Right ventricle myocardium inferior (tissue), 1 donor: ENCODE measurements at regions of chr3 and their contacts with region 1.

Region 1: GRCh38 chr3:149120051-149120972 is 9.1 kb upstream of the HPS3 start:
- DNase-seq: no peak
- ATAC-seq: peak; percentile 59

Region 2: DNA sequence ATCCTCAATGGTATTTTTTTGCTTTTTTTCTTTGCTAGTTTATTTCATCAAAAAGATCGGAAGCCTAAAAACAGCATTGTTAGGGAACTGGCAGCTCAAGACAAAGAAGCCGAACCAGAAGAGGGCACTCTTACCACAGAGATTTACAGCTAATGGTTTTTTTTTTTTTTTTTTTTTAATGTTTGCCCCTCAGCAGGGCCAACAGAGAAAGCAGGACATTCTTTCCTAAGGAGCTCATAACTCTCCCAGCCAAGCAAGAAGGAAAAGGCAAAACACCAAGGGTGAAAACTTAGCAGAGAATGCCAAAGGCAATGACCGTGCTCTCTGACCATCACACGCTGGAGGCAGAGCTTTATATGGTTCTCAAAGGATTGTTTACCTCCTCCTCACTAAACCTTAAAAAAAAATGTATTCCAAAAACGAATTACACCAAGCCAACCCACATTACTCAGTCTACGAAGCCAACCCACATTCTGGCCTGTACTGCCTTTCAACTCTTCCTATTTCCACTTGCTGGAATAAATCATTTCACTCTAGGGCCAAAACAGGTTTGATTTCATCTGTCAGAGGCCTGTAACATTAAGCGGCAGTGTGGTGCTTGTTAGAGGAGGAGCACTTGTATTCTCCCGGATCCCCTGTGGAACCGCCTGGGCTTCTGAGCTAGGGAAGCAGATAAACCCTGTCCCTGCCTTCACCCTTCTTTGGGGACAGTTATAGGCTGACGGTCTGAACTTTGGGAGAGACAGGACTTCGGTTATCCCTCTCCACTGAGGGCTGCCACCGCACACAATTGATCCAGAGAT is 164.6 kb before region 1 on chr3:
- intact Hi-C with region 1: loop called (anchors 5 kb)
- DNase-seq: no peak
- ATAC-seq: peak; percentile 92